Left colon (tissue), 2 donors: ENCODE measurements at regions of chr4 and their contacts with region 1.

Region 1: GRCh38 chr4:163988865-163989264 is 494.4 kb downstream of the TMA16 start:
- DNase-seq: no peak
- ATAC-seq: no peak

Region 2: GRCh38 chr4:163448516-163449197 is 540.2 kb before region 1 on chr4:
- intact Hi-C with region 1: no loop called
- DNase-seq: no peak
- ATAC-seq: no peak

Region 3: DNA sequence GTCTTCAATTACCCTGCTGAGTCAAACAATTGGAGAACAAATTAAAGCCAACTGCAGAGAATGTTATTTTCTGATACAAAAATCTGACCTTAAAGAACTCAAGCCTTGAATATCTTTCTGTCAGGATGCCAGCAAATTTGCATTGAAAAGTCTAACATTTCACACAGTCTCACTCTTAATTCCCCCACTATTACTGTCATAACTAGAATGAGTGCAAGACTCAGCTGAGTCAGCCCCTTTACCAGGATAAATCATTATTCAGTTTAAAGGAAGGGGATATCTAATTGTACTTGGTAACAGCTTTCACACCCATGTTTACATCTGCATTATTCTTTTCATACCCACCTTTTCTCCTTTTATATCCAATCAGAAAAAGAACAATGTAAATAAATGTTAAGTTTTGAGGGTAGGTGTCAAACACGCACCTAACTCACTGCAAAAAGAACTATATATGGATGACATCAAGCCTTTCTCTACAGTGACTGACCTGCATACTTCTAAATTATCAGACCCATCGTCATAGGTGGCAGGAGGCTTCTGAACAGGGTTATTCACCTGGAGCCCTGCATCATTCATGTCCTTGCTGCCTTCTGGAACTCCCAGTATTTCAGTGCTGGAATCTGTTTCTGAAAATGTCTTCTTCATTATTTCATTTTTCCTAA is 376.9 kb before region 1 on chr4:
- intact Hi-C with region 1: loop called in 1 of 2 experiments (anchors 10 kb)
- DNase-seq: no peak
- ATAC-seq: no peak